Endothelial cell of umbilical vein (primary cell): ENCODE measurements at regions of chrX and their contacts with region 1.

Region 1: DNA sequence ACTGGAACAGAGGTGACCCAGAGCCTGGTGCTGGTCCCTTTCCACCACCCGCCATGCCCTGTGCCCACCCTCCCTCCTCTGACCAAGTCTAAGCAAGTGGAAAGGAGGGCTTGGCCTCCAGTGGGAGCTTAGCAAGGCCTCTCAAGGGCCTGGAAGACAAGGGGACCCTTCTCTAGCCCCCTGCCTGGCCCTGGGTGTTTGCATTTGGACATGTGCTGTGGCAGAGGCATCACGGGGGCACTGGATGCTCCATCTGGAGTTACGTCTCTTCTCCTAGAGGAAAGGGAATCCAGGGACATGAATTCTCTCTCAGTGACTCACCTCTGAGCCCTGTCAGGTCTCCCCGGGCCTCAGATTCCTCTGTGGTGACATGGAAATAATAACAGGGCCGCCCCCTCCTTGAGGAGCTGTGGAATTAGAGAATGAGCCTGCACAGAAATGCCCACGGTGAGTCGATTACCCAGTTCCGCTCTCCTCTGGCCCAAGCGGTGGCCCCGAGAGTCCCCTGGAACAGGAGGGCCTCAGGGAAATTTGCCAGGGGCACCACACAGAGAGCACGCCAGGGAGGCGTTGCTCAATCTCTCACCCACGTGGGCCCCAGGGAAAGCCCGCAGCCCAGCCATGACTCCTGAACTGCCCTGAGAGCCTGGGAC is 189.7 kb downstream of the BCOR start:
- DNase-seq: peak; percentile 45
- H3K4me3 ChIP-seq: no peak overlapping the region
- H3K27ac ChIP-seq: peak overlapping the region; percentile 72
- H3K4me1 ChIP-seq: peaks cover 21% of the 10 kb centered on the region
- H3K27me3 ChIP-seq: no peaks in the 10 kb centered on the region
- CTCF ChIP-seq: no peak
- POLR2A ChIP-seq: no peak

Region 2: DNA sequence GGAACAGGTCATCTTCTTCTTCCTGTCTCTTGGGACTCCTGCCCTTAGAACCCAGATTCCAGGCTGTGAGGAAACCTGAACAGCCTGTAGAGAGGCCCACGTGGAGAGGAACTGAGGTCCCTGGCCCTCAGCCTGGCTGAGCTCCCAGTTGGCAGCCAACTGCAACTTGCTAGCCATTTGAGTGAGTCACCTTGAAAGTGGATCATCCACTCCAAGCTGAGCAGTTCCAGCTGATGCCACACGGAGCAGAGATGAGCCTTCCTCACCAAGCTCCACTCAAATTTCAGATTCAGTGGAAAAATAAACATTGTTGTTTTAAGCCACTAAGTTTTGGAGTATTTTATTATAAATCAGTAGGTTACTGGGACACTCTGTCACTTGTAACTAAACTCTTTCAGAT is 202.8 kb before region 1 on chrX:
- CTCF ChIA-PET with region 1: no interaction called
- POLR2A ChIA-PET with region 1: no interaction called
- dilution Hi-C with region 1: no loop called
- intact Hi-C with region 1: no loop called
- DNase-seq: peak; percentile 88
- H3K4me3 ChIP-seq: no peak overlapping the region
- H3K27ac ChIP-seq: no peak overlapping the region
- H3K4me1 ChIP-seq: no peaks in the 10 kb centered on the region
- H3K27me3 ChIP-seq: no peaks in the 10 kb centered on the region
- CTCF ChIP-seq: peak; percentile 29 to 48
- POLR2A ChIP-seq: no peak

Region 3: GRCh38 chrX:39736216-39737211 is 171.6 kb before region 1 on chrX:
- CTCF ChIA-PET with region 1: no interaction called
- POLR2A ChIA-PET with region 1: interaction called, 10 read pairs
- dilution Hi-C with region 1: no loop called
- intact Hi-C with region 1: loop called (anchors 1 kb)
- DNase-seq: peak; percentile 94
- H3K4me3 ChIP-seq: no peak overlapping the region
- H3K27ac ChIP-seq: peak overlapping the region; percentile 92
- H3K4me1 ChIP-seq: peaks cover 15% of the 10 kb centered on the region
- H3K27me3 ChIP-seq: no peaks in the 10 kb centered on the region
- CTCF ChIP-seq: no peak
- POLR2A ChIP-seq: peak; percentile 60

Region 4: DNA sequence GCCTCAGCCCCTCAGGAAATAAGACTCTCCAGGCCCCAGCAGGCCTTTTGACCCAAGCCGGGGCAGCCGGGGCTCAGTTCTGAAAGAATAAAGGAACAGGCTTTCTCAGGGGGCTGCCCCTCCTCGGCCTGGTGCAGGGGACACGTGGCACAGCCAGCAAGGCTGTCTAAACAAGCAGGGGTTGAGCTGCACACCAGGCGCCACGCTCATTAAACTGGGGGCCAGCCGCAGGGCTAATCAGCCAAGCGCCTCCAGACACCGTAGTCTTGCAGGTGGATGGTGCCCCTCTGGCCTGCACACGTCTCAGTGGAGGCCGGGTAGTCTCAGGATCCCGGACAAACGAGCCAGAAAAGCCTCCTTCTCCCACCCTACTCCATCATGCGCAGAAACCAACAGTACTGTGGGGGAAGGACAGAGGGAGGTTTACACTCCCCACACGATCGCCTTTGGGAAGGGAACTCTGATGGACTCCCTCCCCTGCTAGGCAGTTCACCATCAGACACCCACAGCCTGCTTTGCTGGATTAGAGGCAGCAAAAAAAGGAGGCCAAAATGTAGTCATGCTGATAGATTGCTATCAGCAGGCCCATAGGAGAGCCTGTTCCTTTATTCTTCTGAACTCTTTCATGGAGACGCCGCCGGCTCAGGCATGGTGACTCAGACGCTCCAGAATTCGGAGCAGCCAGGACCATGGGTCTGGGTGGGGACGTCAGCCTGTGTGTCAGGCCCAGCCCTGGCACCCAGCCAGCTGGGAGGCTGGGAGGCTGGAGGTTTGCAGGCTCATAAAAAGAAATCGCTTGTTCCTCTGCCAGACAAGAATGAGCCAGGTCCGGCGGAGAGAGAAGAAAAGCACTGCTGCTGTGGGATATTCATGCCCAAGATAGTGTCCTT is 152.7 kb before region 1 on chrX:
- CTCF ChIA-PET with region 1: no interaction called
- POLR2A ChIA-PET with region 1: no interaction called
- dilution Hi-C with region 1: no loop called
- intact Hi-C with region 1: loop called (anchors 5 kb)
- DNase-seq: peak; percentile 92
- H3K4me3 ChIP-seq: no peak overlapping the region
- H3K27ac ChIP-seq: peak overlapping the region; percentile 95
- H3K4me1 ChIP-seq: peaks cover 64% of the 10 kb centered on the region
- H3K27me3 ChIP-seq: no peaks in the 10 kb centered on the region
- CTCF ChIP-seq: no peak
- POLR2A ChIP-seq: no peak

Region 5: DNA sequence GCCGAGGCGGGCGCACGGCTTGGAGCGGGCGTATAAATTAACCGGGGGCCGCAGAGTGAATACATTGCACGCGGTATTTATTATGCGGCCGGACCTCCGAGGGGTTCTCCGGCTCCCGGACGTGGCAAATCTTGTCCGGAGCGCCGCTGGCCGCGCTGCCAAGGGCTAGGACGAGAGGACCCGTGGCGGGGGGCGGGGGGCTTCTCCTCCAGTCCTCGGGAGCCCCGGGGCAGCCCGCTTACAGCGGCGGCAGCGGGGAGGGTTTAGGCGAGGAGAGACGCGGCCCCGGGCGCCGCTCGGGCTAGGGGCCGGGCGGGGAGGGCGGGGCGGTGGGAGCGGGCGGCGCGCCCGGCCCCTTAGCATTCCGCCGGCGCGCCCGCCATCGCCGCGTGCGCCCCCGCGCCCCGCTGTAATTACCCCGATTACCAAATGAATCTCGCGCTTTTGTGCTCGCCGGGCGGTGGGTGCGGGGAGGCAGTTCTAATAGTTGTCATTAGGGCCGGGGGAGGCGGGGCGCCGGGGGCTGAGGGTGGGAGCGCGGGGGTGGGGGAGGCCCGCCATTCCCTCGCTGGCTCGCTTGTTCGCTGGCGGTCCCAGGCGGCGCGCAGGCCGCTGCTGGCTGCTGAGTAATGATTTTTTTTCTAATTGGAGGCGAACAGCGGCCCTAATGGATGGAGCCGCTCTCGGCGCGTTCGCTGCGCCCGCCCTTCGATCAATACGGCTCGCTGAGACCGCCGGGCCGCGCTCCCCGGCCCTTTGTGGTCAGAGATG is 87.0 kb before region 1 on chrX:
- CTCF ChIA-PET with region 1: no interaction called
- POLR2A ChIA-PET with region 1: no interaction called
- dilution Hi-C with region 1: no loop called
- intact Hi-C with region 1: loop called (anchors 5 kb)
- DNase-seq: peak; percentile 13
- H3K4me3 ChIP-seq: peak overlapping the region in 2 of 3 experiments; percentile 11 to 37
- H3K27ac ChIP-seq: no peak overlapping the region
- H3K4me1 ChIP-seq: peaks cover 7% of the 10 kb centered on the region
- H3K27me3 ChIP-seq: no peaks in the 10 kb centered on the region
- CTCF ChIP-seq: no peak
- POLR2A ChIP-seq: no peak

Region 6: DNA sequence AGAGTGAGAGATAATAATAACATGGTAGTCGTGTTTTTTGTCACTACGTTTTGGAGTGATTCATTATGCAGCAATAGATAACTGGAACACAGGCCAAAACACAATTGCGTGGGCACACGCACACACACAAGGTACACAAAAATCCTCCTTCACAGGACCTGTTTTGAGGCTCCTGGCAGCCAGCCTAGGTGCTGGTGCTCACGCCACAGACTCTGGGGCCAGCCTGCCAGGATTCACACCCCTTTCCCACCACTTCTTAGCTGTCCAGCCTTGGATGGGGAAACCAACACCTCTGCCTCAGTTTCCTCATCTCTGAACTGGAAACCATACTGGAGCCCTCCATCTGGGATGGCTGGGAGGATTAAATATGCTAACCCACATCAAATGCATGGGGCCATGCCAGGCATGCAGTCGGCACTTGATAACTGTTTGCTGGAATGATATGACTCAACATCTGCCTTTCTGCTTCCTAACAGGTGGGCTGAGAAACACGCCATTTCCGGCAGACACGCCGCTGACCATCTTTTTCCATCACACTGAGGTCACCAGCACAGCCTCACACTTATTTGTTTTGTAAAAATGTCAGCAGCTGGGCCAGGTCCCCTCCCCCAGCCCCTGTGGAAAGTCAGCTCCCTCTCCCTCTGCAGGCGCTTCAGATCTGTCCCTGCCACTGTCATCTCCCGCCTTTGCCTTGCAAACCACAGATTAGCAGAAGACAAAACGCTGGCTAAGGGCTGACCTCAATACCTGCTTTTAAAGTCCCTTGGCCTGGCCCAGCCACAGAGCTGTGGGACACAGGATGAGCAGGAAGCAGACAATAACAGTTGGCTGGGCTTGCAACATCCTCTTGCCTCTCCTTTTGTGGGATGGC is 47.9 kb before region 1 on chrX:
- CTCF ChIA-PET with region 1: no interaction called
- POLR2A ChIA-PET with region 1: no interaction called
- dilution Hi-C with region 1: no loop called
- intact Hi-C with region 1: loop called (anchors 5 kb)
- DNase-seq: peak; percentile 81
- H3K4me3 ChIP-seq: no peak overlapping the region
- H3K27ac ChIP-seq: peak overlapping the region; percentile 73
- H3K4me1 ChIP-seq: peaks cover 26% of the 10 kb centered on the region
- H3K27me3 ChIP-seq: no peaks in the 10 kb centered on the region
- CTCF ChIP-seq: no peak
- POLR2A ChIP-seq: no peak

Region 7: DNA sequence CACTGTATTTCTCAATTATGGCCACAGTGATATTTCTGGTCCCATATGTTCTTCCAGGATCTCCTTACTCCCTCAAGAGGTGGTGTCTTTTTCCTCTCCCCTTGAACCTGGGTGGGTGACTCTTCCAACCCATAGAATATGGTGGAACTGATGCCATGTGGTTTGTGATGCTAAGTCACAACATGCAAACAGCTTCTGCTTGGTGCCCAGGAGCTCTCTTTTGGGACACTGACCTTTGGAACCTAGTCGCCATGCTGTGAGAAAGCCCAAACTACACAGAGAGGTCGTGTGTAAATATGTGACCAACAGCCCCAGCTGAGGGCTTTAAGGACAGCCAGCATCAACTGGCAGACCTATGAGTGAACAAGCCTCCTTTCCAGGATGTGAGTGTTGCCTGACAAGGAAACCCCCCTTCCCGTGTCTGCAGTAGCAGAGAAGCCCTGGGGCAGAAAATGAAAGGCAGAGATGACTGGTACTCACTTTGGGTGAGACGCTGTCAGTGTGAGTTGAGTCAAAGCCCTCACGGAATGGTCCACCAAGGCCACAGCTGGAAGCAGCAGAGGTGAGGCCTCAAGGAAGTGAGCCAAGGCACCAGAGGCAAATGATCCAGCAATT is 33.8 kb before region 1 on chrX:
- CTCF ChIA-PET with region 1: no interaction called
- POLR2A ChIA-PET with region 1: no interaction called
- dilution Hi-C with region 1: no loop called
- intact Hi-C with region 1: no loop called
- DNase-seq: peak; percentile 10
- H3K4me3 ChIP-seq: no peak overlapping the region
- H3K27ac ChIP-seq: no peak overlapping the region
- H3K4me1 ChIP-seq: no peaks in the 10 kb centered on the region
- H3K27me3 ChIP-seq: no peaks in the 10 kb centered on the region
- CTCF ChIP-seq: no peak
- POLR2A ChIP-seq: no peak

Region 8: DNA sequence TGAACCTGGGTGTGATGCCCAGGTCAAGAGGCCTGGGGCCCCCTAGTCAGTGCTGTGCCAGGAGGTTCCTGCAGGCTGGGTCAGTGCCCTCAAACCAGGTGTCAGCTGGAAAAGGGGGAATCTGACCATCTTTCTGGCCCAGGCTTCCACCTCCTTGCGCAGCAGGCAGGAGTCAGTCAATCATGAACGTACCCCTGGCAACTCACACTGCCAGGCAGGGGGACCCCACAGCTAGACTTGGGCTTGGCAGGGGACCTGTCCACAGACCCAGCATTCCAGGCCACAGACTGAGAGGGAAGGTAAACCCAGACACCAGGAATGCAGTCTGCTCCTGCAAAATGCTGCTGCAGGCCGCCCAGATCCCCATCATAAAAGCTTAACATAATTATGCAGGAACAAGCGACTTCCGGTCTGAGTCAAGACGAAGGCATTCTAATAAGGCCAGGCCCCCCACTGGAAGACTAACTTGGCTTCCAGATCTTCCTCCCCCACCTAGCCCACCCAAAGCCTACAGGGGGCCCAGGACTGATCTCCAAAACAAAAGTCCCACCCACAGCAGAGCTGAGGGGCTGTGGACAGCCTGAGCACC is 33.3 kb after region 1 on chrX:
- CTCF ChIA-PET with region 1: no interaction called
- POLR2A ChIA-PET with region 1: no interaction called
- dilution Hi-C with region 1: no loop called
- intact Hi-C with region 1: loop called (anchors 2 kb)
- DNase-seq: no peak
- H3K4me3 ChIP-seq: no peak overlapping the region
- H3K27ac ChIP-seq: peak overlapping the region; percentile 50
- H3K4me1 ChIP-seq: peaks cover 15% of the 10 kb centered on the region
- H3K27me3 ChIP-seq: no peaks in the 10 kb centered on the region
- CTCF ChIP-seq: no peak
- POLR2A ChIP-seq: no peak